ENCODE measurements at regions of chr16 and their contacts with region 1.

Region 1: GRCh38 chr16:50509521-50510341 is 38.5 kb upstream of the NKD1 start:
- DNase-seq: peak; percentile 86
- H3K4me3 ChIP-seq: no peak overlapping the region
- H3K27ac ChIP-seq: no peak overlapping the region
- H3K4me1 ChIP-seq: no peaks in the 10 kb centered on the region
- H3K27me3 ChIP-seq: no peaks in the 10 kb centered on the region
- CTCF ChIP-seq: peak; percentile 35 to 63 (median 37)
- EP300 ChIP-seq: no peak
- POLR2A ChIP-seq: no peak

Region 2: GRCh38 chr16:50381679-50382440 is 127.9 kb before region 1 on chr16:
- intact Hi-C with region 1: loop called (anchors 10 kb)
- DNase-seq: no peak
- H3K4me3 ChIP-seq: no peak overlapping the region
- H3K27ac ChIP-seq: no peak overlapping the region
- H3K4me1 ChIP-seq: no peaks in the 10 kb centered on the region
- H3K27me3 ChIP-seq: no peaks in the 10 kb centered on the region
- CTCF ChIP-seq: no peak
- EP300 ChIP-seq: no peak
- POLR2A ChIP-seq: no peak

Region 3: DNA sequence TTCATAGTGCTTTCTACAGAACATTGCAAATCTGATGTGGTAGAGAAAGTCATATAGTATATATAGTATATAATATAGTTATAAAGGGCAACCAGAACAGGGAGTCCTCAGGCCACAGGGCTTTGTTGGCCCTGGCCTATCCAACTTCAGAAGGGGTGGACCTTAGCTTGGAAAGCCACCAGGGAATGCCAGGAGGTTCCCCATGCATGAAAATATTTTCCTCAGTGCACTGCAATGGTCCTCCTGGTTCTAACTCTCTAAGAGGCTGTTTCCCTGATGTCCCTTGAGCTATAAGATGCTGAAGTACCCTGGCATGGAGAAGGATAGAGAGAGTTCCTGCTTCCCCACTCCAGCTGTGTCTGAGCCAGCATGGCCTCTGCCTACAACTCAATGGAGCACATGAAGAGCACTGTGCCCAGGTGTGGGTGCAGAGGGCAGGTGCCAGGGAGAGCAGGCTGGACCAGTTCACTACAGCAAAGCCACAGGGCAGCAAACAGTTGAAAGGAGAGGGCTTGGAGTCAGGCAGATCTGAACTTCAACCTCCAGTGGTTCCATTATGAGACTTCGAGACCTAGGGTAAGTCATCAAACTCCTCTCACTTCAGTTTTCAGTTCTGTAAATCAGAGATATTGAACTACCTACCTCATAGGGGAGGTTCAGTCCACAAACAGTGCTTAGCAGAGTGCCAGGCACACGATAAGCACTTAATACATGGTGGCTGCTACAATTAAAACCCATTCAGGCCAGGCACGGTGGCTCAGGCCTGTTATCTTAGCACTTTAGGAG is 458.3 kb after region 1 on chr16:
- intact Hi-C with region 1: no loop called
- DNase-seq: no peak
- H3K4me3 ChIP-seq: no peak overlapping the region
- H3K27ac ChIP-seq: no peak overlapping the region
- H3K4me1 ChIP-seq: no peaks in the 10 kb centered on the region
- H3K27me3 ChIP-seq: no peaks in the 10 kb centered on the region
- CTCF ChIP-seq: no peak
- EP300 ChIP-seq: no peak
- POLR2A ChIP-seq: no peak